Left cardiac atrium (tissue), 4 donors: ENCODE measurements at regions of chr20 and their contacts with region 1.

Region 1: GRCh38 chr20:51595058-51595532 is 52.6 kb upstream of the NFATC2 start:
- DNase-seq: peak; percentile 90
- ATAC-seq: peak; percentile 98

Region 2: GRCh38 chr20:51372176-51372803 is 222.8 kb before region 1 on chr20:
- intact Hi-C with region 1: loop called (anchors 2 to 5 kb)
- DNase-seq: peak; percentile 74
- ATAC-seq: peak; percentile 89 to 90

Region 3: GRCh38 chr20:51385646-51386530 is 209.2 kb before region 1 on chr20:
- intact Hi-C with region 1: loop called in 1 of 2 experiments (anchors 5 kb)
- DNase-seq: no peak
- ATAC-seq: peak in 1 of 2 donors; percentile 32

Region 4: GRCh38 chr20:51668515-51668914 is 73.4 kb after region 1 on chr20:
- intact Hi-C with region 1: no loop called
- DNase-seq: no peak
- ATAC-seq: no peak